Caco-2 (cell line): ENCODE measurements at regions of chr20 and their contacts with region 1.

Region 1: DNA sequence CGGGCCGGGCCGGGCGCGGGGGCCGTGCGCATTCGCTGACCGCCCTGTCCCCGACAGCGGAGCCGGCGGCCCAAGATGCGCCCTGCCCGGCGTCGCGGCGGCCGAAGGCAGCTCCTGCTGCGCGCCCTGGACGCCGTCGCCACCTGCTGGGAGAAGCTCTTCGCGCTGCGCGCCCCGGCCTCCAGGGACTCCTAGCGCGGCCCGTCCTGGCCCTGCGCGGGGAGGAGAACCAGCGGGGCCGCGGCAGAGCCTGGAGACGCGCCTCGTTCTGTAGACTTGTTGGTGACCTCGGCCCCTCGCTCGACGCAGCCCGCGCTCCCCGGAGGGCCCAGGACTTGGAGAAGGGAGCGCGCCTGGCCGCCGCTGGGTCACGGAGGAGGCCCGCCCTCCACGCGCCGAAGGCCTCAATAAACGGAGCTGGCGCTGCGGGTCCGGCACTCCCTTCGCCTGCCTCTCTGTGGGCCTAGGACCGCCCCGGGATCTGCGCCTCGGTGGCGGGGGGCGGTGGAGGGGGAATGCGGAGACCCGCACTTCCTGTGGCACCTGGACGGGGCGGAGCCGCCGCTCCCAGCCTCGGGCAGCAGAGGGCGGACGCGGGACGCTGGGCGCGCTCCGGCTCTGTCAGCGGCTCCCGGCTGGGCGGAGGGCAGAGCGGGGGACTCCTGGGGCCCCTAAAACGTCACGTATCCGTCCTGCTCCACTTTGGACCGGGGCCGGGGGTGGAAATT is 2.7 kb downstream of the C20orf204 start:
- DNase-seq: peak; percentile 92 to 97
- H3K4me3 ChIP-seq: peak overlapping the region; percentile 81
- H3K4me3 Mint-ChIP-seq: peak overlapping the region; percentile 87
- H3K27ac Mint-ChIP-seq: peak overlapping the region; percentile 57
- H3K4me1 ChIP-seq: peaks cover 26% of the 10 kb centered on the region
- H3K4me1 Mint-ChIP-seq: no peaks in the 10 kb centered on the region
- H3K27me3 ChIP-seq: no peaks in the 10 kb centered on the region
- H3K27me3 Mint-ChIP-seq: peaks cover 3% of the 10 kb centered on the region
- CTCF ChIP-seq: peak; percentile 83 to 96

Region 2: DNA sequence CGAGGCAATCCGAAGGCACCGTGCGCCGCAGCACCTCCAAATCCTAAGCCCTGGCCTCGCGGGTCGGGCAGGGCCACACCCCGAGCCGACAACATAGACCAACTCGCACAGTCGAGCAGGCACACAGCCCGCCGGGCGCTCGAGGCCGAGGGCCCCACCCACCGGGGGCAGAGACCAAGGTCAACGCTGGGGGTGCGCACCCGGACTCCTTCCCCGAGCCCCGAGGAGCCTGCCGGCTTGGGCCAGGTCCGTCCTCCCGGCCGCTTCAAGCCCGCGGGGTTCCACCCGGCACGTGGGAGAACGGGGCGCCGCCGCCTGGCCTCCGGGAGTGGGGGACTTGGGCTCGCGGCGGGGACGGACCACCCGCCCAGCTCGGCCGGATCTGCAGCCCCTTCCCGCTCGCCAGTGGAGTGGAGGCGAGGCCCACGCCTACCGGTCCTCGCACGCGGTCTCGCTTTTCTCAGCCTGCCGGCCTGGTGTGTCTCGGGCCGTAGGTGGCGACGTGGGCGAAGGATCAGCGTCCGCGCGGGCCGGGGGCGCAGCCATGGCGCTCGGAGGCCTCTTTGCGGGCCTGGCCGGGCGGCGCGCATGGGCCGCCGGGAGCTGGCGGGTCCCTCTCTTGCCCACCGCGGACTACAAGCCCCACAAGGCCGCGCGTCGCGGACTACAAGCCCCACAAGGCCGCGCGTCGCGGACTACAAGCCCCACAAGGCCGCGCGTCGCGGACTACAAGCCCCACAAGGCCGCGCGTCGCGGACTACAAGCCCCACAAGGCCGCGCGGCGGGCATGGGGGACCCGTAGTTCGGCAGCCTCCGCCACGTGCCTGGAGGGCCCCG is 82.7 kb before region 1 on chr20 and contains the start of gene UCKL1:
- CTCF ChIA-PET with region 1: interaction called, 10 read pairs
- POLR2A ChIA-PET with region 1: interaction called, 4 read pairs
- intact Hi-C with region 1: no loop called
- DNase-seq: peak; percentile 97 to 99
- H3K4me3 ChIP-seq: peak within 1 kb of the TSS; percentile 99
- H3K4me3 Mint-ChIP-seq: peak within 1 kb of the TSS; percentile 89
- H3K27ac Mint-ChIP-seq: peak within 1 kb of the TSS; percentile 94
- H3K4me1 ChIP-seq: peaks cover 22% of the 10 kb centered on the region
- H3K4me1 Mint-ChIP-seq: peaks cover 43% of the 10 kb centered on the region
- H3K27me3 ChIP-seq: no peaks in the 10 kb centered on the region
- H3K27me3 Mint-ChIP-seq: no peaks in the 10 kb centered on the region
- CTCF ChIP-seq: peak in 1 of 2 experiments; percentile 34
- total RNA-seq, gene UCKL1: 101 and 113 TPM in 2 replicates

Region 3: GRCh38 chr20:63980806-63981728 is 57.7 kb before region 1 on chr20 and contains the start of gene PRPF6:
- CTCF ChIA-PET with region 1: interaction called, 139 read pairs
- POLR2A ChIA-PET with region 1: interaction called, 21 read pairs
- intact Hi-C with region 1: loop called (anchors 1 kb)
- DNase-seq: peak; percentile 99 to 100
- H3K4me3 ChIP-seq: peak within 1 kb of the TSS; percentile 58
- H3K4me3 Mint-ChIP-seq: peak within 1 kb of the TSS; percentile 90
- H3K27ac Mint-ChIP-seq: peak within 1 kb of the TSS; percentile 65
- H3K4me1 ChIP-seq: peaks cover 31% of the 10 kb centered on the region
- H3K4me1 Mint-ChIP-seq: peaks cover 30% of the 10 kb centered on the region
- H3K27me3 ChIP-seq: no peaks in the 10 kb centered on the region
- H3K27me3 Mint-ChIP-seq: no peaks in the 10 kb centered on the region
- CTCF ChIP-seq: peak; percentile 99 to 100
- total RNA-seq, gene PRPF6: 176 and 181 TPM in 2 replicates

Region 4: GRCh38 chr20:64024141-64024990 is 14.4 kb before region 1 on chr20:
- CTCF ChIA-PET with region 1: interaction called, 45 read pairs
- POLR2A ChIA-PET with region 1: interaction called, 9 read pairs
- intact Hi-C with region 1: loop called (anchors 1 kb)
- DNase-seq: peak; percentile 92 to 95
- H3K4me3 ChIP-seq: no peak overlapping the region
- H3K4me3 Mint-ChIP-seq: peak overlapping the region; percentile 55
- H3K27ac Mint-ChIP-seq: peak overlapping the region; percentile 83
- H3K4me1 ChIP-seq: peaks cover 34% of the 10 kb centered on the region
- H3K4me1 Mint-ChIP-seq: peaks cover 37% of the 10 kb centered on the region
- H3K27me3 ChIP-seq: no peaks in the 10 kb centered on the region
- H3K27me3 Mint-ChIP-seq: no peaks in the 10 kb centered on the region
- CTCF ChIP-seq: peak in 1 of 2 experiments; percentile 19

Region 5: GRCh38 chr20:64062596-64063388 is 24.1 kb after region 1 on chr20 and contains the start of gene TCEA2:
- CTCF ChIA-PET with region 1: interaction called, 101 read pairs
- POLR2A ChIA-PET with region 1: interaction called, 8 read pairs
- intact Hi-C with region 1: loop called (anchors 1 kb)
- DNase-seq: peak; percentile 99 to 100
- H3K4me3 ChIP-seq: peak within 1 kb of the TSS; percentile 74
- H3K4me3 Mint-ChIP-seq: peak within 1 kb of the TSS; percentile 81
- H3K27ac Mint-ChIP-seq: peak within 1 kb of the TSS; percentile 16
- H3K4me1 ChIP-seq: peaks cover 23% of the 10 kb centered on the region
- H3K4me1 Mint-ChIP-seq: peaks cover 28% of the 10 kb centered on the region
- H3K27me3 ChIP-seq: no peaks in the 10 kb centered on the region
- H3K27me3 Mint-ChIP-seq: no peaks in the 10 kb centered on the region
- CTCF ChIP-seq: no peak
- total RNA-seq, gene TCEA2: 39.9 and 48.3 TPM in 2 replicates

Region 6: DNA sequence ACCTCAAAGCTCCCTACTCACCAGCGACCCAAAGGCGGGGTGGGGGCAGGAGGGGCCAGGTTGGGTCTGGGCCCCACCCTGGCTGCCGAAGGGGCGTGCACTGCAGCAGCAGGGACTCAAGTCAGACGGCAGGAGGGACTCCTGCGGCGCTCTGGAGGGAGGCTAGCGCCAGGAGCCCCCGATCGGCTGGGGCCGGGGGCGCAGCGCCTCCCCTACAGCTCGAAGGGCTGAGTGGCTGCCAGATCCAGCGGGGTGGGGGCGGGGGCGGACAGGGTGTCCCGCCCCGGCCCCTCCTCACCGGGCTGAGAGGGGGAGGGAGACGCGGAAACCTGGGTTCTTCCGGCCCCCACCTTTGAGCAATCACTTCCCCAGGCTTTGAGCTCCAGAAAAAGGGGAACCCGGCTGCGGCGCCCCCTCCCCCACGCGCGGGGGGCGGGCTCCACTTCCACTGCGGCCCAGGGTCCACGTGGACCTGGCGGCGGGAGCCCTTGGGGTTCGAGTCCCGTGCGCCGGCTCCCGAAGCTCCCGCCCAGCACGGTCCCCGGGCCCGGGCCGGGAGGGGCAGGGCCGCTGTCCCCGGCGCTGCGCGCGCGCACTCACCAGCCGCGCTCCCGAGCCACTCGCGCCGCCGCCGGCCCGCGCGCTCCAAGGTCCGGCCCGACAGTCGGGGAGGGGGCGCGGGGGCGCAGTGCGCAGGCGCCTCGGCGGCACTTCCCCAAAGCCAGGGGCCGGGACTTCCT is 40.7 kb after region 1 on chr20 and contains the start of gene RGS19:
- CTCF ChIA-PET with region 1: interaction called, 13 read pairs
- POLR2A ChIA-PET with region 1: no interaction called
- intact Hi-C with region 1: no loop called
- DNase-seq: peak; percentile 91 to 98
- H3K4me3 ChIP-seq: peak within 1 kb of the TSS; percentile 96
- H3K4me3 Mint-ChIP-seq: peak within 1 kb of the TSS; percentile 88
- H3K27ac Mint-ChIP-seq: peak within 1 kb of the TSS; percentile 75
- H3K4me1 ChIP-seq: peaks cover 32% of the 10 kb centered on the region
- H3K4me1 Mint-ChIP-seq: peaks cover 22% of the 10 kb centered on the region
- H3K27me3 ChIP-seq: peaks cover 2% of the 10 kb centered on the region
- H3K27me3 Mint-ChIP-seq: peaks cover 4% of the 10 kb centered on the region
- CTCF ChIP-seq: peak in 1 of 2 experiments; percentile 18
- total RNA-seq, gene RGS19: 29.3 and 34.3 TPM in 2 replicates